ENCODE measurements at regions of chr19 and their contacts with region 1.

Region 1: DNA sequence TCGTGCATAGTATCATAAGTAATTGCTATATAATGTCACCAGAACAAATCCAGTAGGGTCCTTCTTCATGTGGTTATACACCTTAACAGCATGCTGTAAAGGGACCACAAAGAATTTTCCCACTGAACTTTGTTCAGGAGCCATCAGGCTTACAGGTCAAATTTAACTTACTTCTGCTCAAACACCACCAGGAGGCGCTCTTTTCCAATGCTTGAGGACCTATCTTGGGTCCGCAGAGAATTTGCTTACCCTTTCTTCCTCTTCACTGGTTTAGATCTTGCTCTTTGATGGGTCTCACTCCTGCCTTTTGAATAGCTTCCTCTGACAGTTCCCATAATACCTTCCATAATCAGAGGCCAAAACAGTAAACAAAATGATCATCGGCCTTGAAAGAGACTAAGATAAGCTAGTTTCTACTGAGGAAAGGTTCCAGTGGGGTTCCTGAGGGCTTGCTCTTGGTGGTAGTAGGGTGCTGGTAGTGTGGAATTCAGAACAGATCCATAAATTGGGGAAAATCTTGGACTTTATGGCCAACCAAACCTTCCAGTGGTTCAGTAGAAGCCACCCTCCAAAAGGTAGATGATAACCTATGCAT is 37.4 kb downstream of the SCGB2B2 start:
- DNase-seq: no peak
- ATAC-seq: peak; percentile 84
- H3K4me3 ChIP-seq: no peak overlapping the region
- H3K27ac ChIP-seq: no peak overlapping the region
- H3K4me1 ChIP-seq: no peaks in the 10 kb centered on the region
- H3K27me3 ChIP-seq: no peaks in the 10 kb centered on the region
- CTCF ChIP-seq: peak; percentile 83

Region 2: GRCh38 chr19:34712395-34713261 is 73.0 kb after region 1 on chr19:
- intact Hi-C with region 1: loop called (anchors 5 kb)
- DNase-seq: no peak
- ATAC-seq: peak; percentile 91
- H3K4me3 ChIP-seq: no peak overlapping the region
- H3K27ac ChIP-seq: no peak overlapping the region
- H3K4me1 ChIP-seq: no peaks in the 10 kb centered on the region
- H3K27me3 ChIP-seq: no peaks in the 10 kb centered on the region
- CTCF ChIP-seq: peak; percentile 75

Region 3: DNA sequence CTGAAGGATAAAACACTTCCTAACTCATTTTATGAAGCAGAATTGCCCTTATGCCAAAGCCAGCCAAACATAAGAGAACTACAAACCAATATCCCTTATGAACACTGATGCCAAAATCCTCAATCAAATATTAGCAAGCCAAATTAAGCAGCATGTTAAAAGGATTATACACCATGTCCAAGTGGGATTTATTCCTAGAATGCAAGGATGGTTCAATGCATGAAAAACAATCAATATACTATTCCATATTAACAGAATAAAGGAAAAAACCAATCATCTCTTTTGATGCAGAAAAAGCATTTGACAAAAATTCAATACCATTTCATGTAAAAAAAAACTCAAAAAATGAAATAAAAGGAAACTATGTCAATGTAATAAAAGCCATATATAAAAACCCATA is 313.5 kb after region 1 on chr19:
- intact Hi-C with region 1: no loop called
- DNase-seq: no peak
- ATAC-seq: no peak
- H3K4me3 ChIP-seq: no peak overlapping the region
- H3K27ac ChIP-seq: no peak overlapping the region
- H3K4me1 ChIP-seq: no peaks in the 10 kb centered on the region
- H3K27me3 ChIP-seq: no peaks in the 10 kb centered on the region
- CTCF ChIP-seq: no peak

Measured in upper lobe of right lung (tissue), 1 donor.